Aorta (tissue), 5 donors: ENCODE measurements at regions of chr16 and their contacts with region 1.

Region 1: DNA sequence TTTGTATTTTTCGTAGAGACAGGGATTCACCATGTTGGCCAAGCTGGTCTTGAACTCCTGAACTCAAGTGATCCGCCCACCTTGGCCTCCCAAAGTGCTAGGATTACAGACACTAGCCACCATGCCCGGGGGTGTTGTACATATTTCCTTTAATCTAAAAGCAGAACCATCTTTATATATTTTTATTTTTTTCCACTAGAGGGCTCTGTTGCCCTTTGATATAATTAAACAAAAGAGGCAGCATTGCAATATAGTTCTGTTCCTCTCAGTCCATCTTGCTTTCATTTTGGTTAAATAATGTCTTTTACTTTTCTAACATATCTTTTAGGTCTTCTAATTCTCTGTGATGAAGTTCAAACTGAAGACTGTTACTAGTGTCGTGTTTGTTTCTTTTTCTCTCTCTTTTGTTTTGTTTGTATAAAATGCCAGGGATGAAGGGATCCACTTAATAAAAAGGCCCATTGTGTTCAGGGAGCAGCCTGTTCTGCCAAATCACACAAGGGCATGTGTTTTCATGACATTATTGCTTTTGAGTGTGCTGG is 23.4 kb downstream of the WWOX start:
- DNase-seq: no peak
- ATAC-seq: peak; percentile 84
- H3K4me3 ChIP-seq: peak overlapping the region in 1 of 2 donors; percentile 26
- H3K27ac ChIP-seq: no peak overlapping the region
- H3K4me1 ChIP-seq: peaks cover 0 to 3% of the 10 kb centered on the region in 2 donors
- H3K27me3 ChIP-seq: no peaks in the 10 kb centered on the region

Region 2: GRCh38 chr16:78209951-78210661 is 87.3 kb after region 1 on chr16:
- intact Hi-C with region 1: no loop called
- DNase-seq: no peak
- ATAC-seq: no peak
- H3K4me3 ChIP-seq: no peak overlapping the region
- H3K27ac ChIP-seq: no peak overlapping the region
- H3K4me1 ChIP-seq: peaks cover 0 to 3% of the 10 kb centered on the region in 2 donors
- H3K27me3 ChIP-seq: peaks cover 0 to 1% of the 10 kb centered on the region in 2 donors

Region 3: DNA sequence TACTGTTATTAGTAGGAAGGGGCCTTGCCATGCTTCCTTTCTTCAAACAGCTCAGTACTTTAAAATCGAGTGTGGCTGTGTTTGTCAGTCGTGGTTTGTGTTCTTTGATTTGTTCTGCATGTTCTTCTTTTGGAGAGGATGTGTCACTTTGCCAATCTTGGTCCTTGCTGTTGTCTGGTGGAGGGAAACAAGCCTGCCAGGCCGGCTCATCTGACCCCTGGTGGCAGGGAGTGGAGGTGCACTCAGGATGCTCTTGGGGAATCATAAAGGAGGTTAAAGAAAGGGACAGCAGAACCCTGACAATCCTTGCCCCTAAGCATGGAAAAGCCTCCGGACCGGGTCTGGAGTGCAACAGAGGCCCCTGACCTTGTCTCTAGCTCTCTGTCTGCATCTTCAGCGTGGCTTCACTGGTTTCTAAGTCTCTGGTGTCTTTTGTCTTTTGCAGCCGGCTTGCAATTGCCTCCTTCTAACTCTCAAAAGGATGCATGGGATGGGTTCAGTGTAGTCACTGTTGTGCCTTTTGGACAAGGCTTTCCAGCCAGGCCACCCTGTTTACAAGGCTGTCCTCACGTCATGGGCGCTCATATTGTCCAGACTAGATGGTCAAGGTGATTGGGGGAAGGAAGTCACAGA is 112.4 kb after region 1 on chr16:
- intact Hi-C with region 1: loop called (anchors 2 kb)
- DNase-seq: peak; percentile 73 to 88
- ATAC-seq: peak; percentile 79
- H3K4me3 ChIP-seq: no peak overlapping the region
- H3K27ac ChIP-seq: no peak overlapping the region
- H3K4me1 ChIP-seq: peaks cover 0 to 4% of the 10 kb centered on the region in 2 donors
- H3K27me3 ChIP-seq: no peaks in the 10 kb centered on the region